Right ventricle myocardium inferior (tissue), 1 donor: ENCODE measurements at regions of chr14 and their contacts with region 1.

Region 1: DNA sequence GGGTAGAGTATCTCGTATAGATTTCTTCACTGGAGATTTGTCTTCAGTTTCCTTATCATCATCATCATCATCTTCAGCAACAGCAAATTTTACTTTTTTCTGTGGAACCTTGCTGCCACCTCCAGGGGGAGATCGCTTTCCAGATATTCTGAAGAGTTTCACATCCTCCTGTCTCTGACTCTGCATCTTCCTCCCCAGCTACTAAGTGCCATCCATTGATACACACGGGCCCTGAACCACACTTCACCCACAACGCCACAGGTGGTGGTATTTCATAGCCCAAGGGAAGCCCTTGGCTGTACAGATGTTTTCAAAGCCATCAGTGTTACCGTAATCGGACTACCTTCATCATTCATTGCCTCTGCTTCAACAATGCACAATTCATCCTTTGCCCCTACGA is 82.2 kb downstream of the PPP2R5C start:
- DNase-seq: no peak
- ATAC-seq: peak; percentile 26

Region 2: DNA sequence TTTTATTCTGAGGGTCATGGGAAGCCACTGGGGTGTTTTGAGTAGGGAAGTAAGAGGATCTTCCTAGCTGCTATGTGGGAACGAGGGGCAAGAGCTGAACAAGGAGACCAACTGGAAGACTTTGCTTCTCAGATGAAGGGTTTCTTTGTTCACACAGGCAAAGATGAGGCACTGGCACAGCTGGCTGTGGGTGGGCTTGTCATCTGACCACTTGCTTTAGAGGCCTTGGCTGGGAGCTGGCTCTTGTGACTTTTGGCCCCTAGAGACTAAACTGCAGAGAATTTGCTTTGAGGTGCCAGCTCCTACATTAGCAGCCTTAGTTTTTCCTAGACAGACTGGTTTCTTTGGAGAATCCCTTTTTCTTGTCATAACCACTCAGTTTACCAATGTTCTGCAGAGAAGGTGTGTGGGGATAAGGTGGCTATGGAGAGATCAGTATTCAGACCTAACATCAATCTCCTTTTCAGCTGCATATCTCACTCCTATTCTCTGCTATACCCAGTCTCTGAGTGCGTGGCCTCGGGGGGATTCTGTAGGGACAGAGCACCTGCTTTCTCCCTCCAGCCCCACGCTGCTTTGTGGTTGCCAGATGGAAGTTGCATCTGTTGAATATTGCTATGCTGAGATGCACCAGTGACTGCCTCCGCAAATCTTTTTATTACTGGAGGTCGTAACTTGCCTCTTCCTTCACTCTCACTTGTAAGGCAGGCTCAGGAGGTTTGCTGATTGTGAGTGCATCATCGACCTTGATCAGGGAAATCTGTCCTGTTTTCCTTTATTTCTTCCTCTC is 69.5 kb before region 1 on chr14:
- intact Hi-C with region 1: loop called (anchors 5 kb)
- DNase-seq: no peak
- ATAC-seq: no peak

Region 3: GRCh38 chr14:101903111-101903561 is 59.5 kb after region 1 on chr14:
- intact Hi-C with region 1: no loop called
- DNase-seq: peak; percentile 86
- ATAC-seq: peak; percentile 93